ENCODE measurements at regions of chr3 and their contacts with region 1.

Region 1: DNA sequence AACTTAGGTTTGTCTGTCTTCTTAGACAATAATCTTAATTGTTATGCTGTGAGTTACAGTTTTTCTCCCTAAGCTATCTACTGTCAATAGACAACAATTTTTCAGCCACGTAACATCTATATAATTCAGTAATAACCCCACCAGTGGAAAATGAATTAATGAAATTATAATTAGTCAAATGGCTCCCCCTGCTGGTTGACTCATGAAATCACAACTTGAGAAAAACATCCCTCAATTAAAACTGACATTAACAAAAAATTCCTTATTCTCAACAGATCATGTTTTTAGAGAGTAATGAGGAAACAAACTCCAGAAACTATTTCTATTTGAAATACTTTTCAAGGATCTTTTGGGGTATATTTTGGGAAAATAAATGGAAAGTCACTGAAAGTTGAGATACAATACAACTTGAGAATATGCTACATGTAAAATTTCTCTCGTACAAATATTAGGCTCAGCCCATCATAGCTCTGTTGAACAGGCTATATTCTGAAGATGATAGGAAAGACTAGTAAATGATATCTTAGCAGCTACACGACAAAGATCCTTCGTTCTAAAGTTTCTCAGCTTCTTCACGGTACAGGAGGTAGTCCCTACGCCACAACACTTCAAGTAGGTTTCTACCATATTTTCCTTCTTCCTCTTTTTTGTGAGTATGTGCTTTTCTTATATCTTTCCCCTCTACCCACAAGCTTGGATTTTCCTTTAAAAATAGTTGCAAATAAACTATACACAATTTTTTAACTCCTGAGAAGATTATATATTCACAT is 20.7 kb downstream of the PPP1R2 start:
- DNase-seq: no peak
- ATAC-seq: no peak
- H3K4me3 ChIP-seq: no peak overlapping the region
- H3K27ac ChIP-seq: no peak overlapping the region
- H3K4me1 ChIP-seq: peaks cover 0 to 6% (median 0%) of the 10 kb centered on the region in 12 donors
- H3K27me3 ChIP-seq: no peaks in the 10 kb centered on the region
- CTCF ChIP-seq: peak; percentile 69 to 93 (median 78)
- POLR2A ChIP-seq: no peak

Region 2: GRCh38 chr3:194661374-194661773 is 861.1 kb before region 1 on chr3:
- intact Hi-C with region 1: loop called in 1 of 10 experiments (anchors 10 kb)
- DNase-seq: no peak
- ATAC-seq: peak in 2 of 4 donors; percentile 34 to 62
- H3K4me3 ChIP-seq: no peak overlapping the region
- H3K27ac ChIP-seq: peak overlapping the region in 1 of 12 donors; percentile 13
- H3K4me1 ChIP-seq: peaks cover 0 to 14% (median 0%) of the 10 kb centered on the region in 12 donors
- H3K27me3 ChIP-seq: no peaks in the 10 kb centered on the region
- CTCF ChIP-seq: no peak
- POLR2A ChIP-seq: no peak

Region 3: GRCh38 chr3:194671900-194672808 is 850.3 kb before region 1 on chr3 and contains the start of gene LSG1:
- intact Hi-C with region 1: loop called in 2 of 10 experiments (anchors 10 kb)
- DNase-seq: peak; percentile 92 to 95 (median 94)
- ATAC-seq: peak; percentile 92 to 97 (median 95)
- H3K4me3 ChIP-seq: peak within 1 kb of the TSS; percentile 67 to 93 (median 82)
- H3K27ac ChIP-seq: peak within 1 kb of the TSS; percentile 90 to 98 (median 94)
- H3K4me1 ChIP-seq: peaks cover 0 to 36% (median 17%) of the 10 kb centered on the region in 12 donors
- H3K27me3 ChIP-seq: no peaks in the 10 kb centered on the region
- CTCF ChIP-seq: peak in 1 of 12 donors; percentile 5
- POLR2A ChIP-seq: peak in 1 of 2 donors; percentile 39
- total RNA-seq, gene LSG1: 13.7 to 22.2 (median 18.9) TPM

Region 4: GRCh38 chr3:195271116-195271858 is 251.2 kb before region 1 on chr3 and contains the start of gene XXYLT1:
- intact Hi-C with region 1: loop called (anchors 1 to 5 kb)
- DNase-seq: peak; percentile 90 to 95 (median 92)
- ATAC-seq: peak; percentile 92 to 98 (median 95)
- H3K4me3 ChIP-seq: peak within 1 kb of the TSS; percentile 61 to 98 (median 86)
- H3K27ac ChIP-seq: peak within 1 kb of the TSS; percentile 51 to 96 (median 90)
- H3K4me1 ChIP-seq: peaks cover 0 to 28% (median 16%) of the 10 kb centered on the region in 12 donors
- H3K27me3 ChIP-seq: no peaks in the 10 kb centered on the region
- CTCF ChIP-seq: peak; percentile 93 to 99 (median 96)
- POLR2A ChIP-seq: peak in 1 of 2 donors; percentile 52
- total RNA-seq, gene XXYLT1: 2.1 to 8.6 (median 5.5) TPM

Region 5: GRCh38 chr3:195794708-195795107 is 272.3 kb after region 1 on chr3:
- intact Hi-C with region 1: no loop called
- DNase-seq: no peak
- ATAC-seq: no peak
- H3K4me3 ChIP-seq: no peak overlapping the region
- H3K27ac ChIP-seq: no peak overlapping the region
- H3K4me1 ChIP-seq: no peaks in the 10 kb centered on the region
- H3K27me3 ChIP-seq: peaks cover 0 to 15% (median 0%) of the 10 kb centered on the region in 9 donors
- CTCF ChIP-seq: no peak
- POLR2A ChIP-seq: no peak

Region 6: GRCh38 chr3:196047391-196048030 is 525.1 kb after region 1 on chr3:
- intact Hi-C with region 1: no loop called
- DNase-seq: no peak
- ATAC-seq: no peak
- H3K4me3 ChIP-seq: no peak overlapping the region
- H3K27ac ChIP-seq: no peak overlapping the region
- H3K4me1 ChIP-seq: no peaks in the 10 kb centered on the region
- H3K27me3 ChIP-seq: no peaks in the 10 kb centered on the region
- CTCF ChIP-seq: no peak
- POLR2A ChIP-seq: no peak